H1 (cell line): ENCODE measurements at regions of chr16 and their contacts with region 1.

Region 1: DNA sequence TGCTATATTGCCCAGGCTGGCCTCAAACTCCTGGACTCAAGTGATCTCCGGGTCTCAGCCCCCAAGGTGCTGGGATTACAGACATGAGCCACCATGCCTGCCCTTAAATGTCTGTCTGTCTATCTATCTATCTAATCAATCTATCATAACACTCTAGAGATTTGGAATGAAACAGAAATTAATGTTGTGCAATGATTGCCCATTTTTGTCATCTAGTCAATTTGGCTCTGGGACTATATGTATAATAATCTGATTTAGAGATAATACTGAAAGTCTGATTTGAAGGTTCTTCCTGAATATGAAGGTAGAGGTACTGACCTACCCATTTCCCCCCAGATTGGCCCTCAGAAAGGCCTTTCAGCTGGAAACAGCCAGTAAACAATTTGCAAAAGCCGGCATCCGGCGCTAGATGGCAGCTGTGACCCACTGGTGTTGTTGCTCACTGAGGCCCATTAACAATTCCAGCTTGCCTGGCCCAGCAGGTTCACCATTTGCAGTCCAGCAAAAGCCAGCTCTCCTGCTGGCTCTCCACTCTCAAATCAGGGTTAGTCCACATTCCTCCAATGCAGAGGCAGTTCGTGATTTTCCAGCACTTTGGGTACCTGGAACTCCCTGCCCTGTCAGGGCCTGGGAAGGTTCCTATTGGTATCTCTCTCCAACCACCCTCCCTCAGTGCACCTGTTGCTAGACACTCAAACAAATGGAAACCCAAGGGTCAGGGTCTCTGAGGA is 22.9 kb upstream of the C16orf87 start:
- DNase-seq: peak; percentile 70 to 87
- H3K4me3 ChIP-seq: no peak overlapping the region
- H3K27ac ChIP-seq: no peak overlapping the region
- H3K4me1 ChIP-seq: peaks cover 0 to 4% (median 0%) of the 10 kb centered on the region in 4 experiments; a peak in 4 of 7 replicates
- H3K27me3 ChIP-seq: no peaks in the 10 kb centered on the region
- CTCF ChIP-seq: peak; percentile 79 to 96 (median 93)
- EP300 ChIP-seq: 0 out of 3 replicates have a peak, but pooled peaks of 1 of the 2 experiments have one; percentile 9
- POLR2A ChIP-seq: no peak
- RAD21 ChIP-seq: peak; percentile 99

Region 2: DNA sequence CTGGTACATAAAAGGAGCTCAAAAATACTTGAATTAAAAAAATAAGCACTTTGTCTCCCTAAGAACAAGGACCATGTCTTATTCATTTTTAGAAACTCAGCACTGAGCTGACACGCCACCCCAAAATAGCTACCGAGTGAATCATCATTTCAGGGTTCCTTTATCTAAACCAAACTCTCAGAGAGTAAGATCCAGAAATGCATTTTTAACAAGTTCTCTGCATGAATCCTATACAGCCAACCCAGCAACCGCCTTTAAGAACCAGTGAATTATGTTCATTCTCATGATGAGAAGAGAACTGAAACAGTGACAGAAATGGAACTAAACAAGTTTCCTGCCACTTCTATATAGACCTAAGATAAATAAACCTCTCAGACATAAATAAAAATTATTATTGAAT is 31.6 kb before region 1 on chr16:
- CTCF ChIA-PET with region 1: no interaction called
- POLR2A ChIA-PET with region 1: no interaction called
- DNase-seq: no peak
- H3K4me3 ChIP-seq: no peak overlapping the region
- H3K27ac ChIP-seq: no peak overlapping the region
- H3K4me1 ChIP-seq: peaks cover 0 to 2% (median 0%) of the 10 kb centered on the region in 4 experiments; a peak in 2 of 7 replicates
- H3K27me3 ChIP-seq: no peaks in the 10 kb centered on the region
- CTCF ChIP-seq: no peak
- EP300 ChIP-seq: no peak
- POLR2A ChIP-seq: no peak
- RAD21 ChIP-seq: no peak

Region 3: DNA sequence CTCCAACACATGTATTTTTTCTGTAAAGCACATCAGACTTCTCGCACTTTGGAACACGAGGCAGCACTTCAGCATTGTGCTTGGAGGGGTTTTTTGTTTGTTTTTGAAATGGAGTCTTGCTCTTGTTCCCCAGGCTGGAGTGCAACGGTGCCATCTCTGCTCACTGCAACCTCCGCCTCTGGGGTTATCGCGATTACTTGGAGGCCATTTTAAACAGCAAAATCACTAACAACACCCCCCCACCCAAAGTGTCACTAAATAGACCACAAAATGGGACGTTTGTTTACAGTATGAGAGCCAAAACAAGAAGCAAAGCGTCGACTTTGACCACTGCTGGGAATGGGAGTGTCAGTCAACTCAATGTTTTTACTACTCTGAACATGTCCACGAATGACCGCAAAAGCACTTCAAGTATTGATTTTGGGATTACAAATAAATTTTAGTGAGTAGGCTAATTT is 13.9 kb before region 1 on chr16:
- CTCF ChIA-PET with region 1: interaction called, 13 read pairs
- POLR2A ChIA-PET with region 1: interaction called, 4 read pairs
- DNase-seq: peak in 1 of 2 experiments; percentile 32
- H3K4me3 ChIP-seq: no peak overlapping the region
- H3K27ac ChIP-seq: no peak overlapping the region
- H3K4me1 ChIP-seq: no peaks in the 10 kb centered on the region
- H3K27me3 ChIP-seq: no peaks in the 10 kb centered on the region
- CTCF ChIP-seq: no peak
- EP300 ChIP-seq: no peak
- POLR2A ChIP-seq: no peak
- RAD21 ChIP-seq: no peak

Region 4: GRCh38 chr16:46883690-46884512 is 30.0 kb after region 1 on chr16 and contains the start of gene GPT2:
- CTCF ChIA-PET with region 1: interaction called, 31 read pairs
- POLR2A ChIA-PET with region 1: interaction called, 150 read pairs
- DNase-seq: peak; percentile 88 to 97
- H3K4me3 ChIP-seq: peak within 1 kb of the TSS; percentile 85 to 95 (median 86)
- H3K27ac ChIP-seq: peak within 1 kb of the TSS; percentile 79
- H3K4me1 ChIP-seq: peaks cover 8 to 31% (median 18%) of the 10 kb centered on the region in 4 experiments
- H3K27me3 ChIP-seq: no peaks in the 10 kb centered on the region
- CTCF ChIP-seq: no peak
- EP300 ChIP-seq: no peak
- POLR2A ChIP-seq: peak; percentile 52 to 89
- RAD21 ChIP-seq: no peak
- total RNA-seq, gene GPT2: 86.3 and 94.1 TPM in 2 replicates

Region 5: DNA sequence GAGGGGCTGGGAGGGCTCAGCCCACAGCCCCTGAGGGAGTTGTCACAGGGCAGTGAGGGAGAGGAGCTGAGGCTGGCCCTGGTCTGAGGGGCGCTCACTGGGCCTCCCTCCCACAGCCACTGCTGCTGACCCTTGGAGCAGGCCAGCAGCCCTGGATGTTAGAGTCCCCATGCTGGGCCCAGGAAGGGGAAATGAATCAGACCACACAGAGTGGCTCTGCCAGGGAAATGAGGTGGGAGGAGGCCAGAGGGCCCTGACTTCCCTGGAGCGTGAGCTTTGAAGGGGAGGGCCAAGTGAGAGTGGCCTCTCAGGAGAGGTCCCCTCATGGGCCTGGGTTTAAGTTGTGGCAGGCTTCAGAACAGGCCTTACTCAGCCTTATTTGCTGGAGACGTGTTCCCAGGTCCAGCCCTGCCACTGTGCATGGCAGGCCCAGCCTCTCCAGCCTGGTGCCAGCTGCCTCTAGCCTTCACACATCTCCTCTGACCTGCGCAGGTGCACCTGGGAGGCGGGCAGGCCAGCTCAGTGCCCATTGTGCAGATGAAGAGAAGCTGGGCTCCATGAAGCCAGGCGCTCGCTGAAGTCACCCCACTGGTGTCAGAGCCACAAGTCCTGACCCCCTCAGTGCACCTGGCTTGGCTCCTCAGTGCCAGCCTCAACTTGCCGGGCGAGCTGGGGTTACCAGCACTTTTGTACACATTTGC is 45.7 kb after region 1 on chr16:
- CTCF ChIA-PET with region 1: interaction called, 124 read pairs
- POLR2A ChIA-PET with region 1: interaction called, 10 read pairs
- DNase-seq: no peak
- H3K4me3 ChIP-seq: no peak overlapping the region
- H3K27ac ChIP-seq: no peak overlapping the region
- H3K4me1 ChIP-seq: no peaks in the 10 kb centered on the region; a peak in 1 of 7 replicates
- H3K27me3 ChIP-seq: no peaks in the 10 kb centered on the region
- CTCF ChIP-seq: no peak
- EP300 ChIP-seq: no peak
- POLR2A ChIP-seq: no peak
- RAD21 ChIP-seq: no peak

Region 6: DNA sequence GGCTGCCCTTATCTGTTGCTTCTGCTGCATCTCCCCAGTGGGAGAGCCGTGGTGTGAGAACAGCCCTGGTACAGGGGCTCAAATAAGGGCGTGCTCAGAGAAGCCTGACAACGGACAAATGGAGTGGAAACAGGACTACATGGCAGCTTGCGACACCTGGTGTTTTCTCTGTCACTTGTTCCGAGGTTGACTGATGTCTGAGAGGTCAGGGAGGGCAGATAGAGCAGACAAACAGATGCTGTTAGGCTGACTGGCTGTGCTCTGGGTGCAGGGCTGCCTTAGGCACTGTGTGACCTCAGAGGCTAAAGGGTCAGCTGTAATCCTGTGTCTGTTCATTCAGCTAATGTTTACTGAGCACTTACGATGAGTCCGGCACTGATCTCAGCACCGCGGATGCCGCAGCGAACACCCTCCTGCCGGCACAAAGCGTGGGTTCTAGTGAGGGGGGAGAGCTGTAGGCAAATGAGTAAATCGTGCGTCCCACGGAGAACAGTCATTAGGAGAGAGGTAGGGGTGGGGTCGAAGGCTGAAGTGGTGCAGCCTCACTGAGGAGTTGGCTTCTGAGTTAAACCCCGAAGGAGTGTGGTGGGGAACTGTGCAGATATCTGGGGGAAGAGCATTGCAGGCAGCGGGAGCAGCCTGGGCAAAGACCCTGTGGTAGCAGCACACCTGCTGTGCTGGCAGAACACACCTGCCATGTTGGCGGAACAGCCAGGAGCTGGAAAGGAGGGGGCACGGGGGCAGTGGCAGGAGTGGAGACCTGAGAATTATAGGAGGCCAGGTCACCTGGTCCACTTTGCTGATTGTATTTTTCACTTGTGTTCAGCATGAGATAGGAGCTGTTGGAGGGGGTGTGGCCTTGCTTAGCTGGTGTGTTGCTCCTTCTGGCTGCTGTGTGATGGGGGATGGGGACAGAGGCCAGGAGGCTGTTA is 65.2 kb after region 1 on chr16:
- CTCF ChIA-PET with region 1: interaction called, 124 read pairs
- POLR2A ChIA-PET with region 1: interaction called, 3 read pairs
- DNase-seq: no peak
- H3K4me3 ChIP-seq: no peak overlapping the region
- H3K27ac ChIP-seq: no peak overlapping the region
- H3K4me1 ChIP-seq: no peaks in the 10 kb centered on the region
- H3K27me3 ChIP-seq: no peaks in the 10 kb centered on the region
- CTCF ChIP-seq: no peak
- EP300 ChIP-seq: no peak
- POLR2A ChIP-seq: no peak
- RAD21 ChIP-seq: no peak